Naive thymus-derived CD8-positive, alpha-beta T cell (primary cell): ENCODE measurements at regions of chr5 and their contacts with region 1.

Region 1: DNA sequence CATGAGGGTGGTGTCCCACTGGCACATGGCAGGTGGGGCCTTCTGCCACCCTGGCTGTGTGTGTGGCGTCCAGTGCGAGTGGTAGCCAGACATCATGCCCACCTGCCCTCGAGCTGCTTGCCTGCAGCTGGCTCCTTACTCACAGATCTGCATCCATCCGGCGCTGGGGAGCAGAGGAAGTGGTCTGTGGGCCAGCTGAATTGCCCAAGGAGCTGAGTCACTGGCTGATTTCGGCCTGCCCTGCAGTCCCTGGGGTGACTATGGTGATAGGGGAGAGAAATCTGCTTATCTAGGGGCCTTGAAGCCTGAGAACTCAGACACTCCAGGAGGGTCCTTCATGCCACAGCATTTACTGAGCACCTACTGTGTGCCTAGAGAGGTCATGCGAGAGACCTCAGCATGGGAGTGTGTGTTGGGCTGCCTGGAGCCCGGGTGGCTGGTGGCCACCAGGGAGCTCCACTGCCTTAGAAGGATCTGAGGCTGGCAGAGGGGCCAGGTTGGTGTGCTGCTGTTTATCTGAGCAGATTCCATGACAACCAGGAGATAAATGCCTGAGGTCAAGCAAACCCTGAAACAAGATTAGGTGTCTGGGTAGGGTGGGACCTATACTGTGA is 57.1 kb downstream of the SLC22A5 start:
- DNase-seq: peak in 5 of 10 donors; percentile 31 to 59 (median 36)
- ATAC-seq: peak; percentile 31 to 40
- H3K4me3 Mint-ChIP-seq: peak overlapping the region; percentile 62 to 90 (median 84)
- H3K27ac Mint-ChIP-seq: peak overlapping the region; percentile 95 to 100 (median 98)
- H3K4me1 Mint-ChIP-seq: peaks cover 51 to 100% (median 98%) of the 10 kb centered on the region in 4 donors
- H3K27me3 Mint-ChIP-seq: no peaks in the 10 kb centered on the region

Region 2: DNA sequence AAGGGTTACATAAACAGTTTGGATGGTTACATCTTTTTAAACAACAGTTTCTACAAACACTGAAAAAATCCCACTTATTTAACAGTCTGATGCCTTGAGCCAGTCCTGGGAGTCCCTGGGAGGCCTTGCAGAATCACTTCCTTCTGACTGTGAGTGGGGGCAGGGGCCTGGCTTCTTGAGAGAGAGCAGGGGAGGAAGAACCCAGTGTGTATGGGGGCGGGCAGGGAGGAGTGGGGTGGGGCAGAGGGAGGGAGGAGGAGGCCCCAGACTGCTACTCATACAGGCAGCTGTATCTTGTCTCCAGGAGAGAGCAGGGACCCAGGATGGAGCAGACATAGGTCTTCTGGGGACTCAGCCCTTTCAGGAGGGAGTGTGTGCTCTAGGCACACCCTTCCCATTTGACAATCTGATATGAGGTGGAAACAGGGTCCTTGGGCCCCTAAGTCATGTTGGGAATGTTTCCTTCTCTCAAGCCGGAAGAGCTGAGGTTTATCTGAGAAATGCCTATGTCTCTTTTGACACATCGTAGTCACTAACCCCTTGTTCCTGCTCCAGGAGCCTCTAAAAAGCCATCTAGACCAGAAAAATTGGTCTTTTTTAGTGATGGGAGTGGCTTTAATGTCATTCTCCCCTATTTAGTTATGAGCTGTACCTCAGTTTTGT is 11.1 kb after region 1 on chr5:
- POLR2A ChIA-PET with region 1: interaction called, 39 read pairs
- DNase-seq: peak; percentile 29 to 82 (median 52)
- ATAC-seq: peak; percentile 90 to 93
- H3K4me3 Mint-ChIP-seq: peak overlapping the region; percentile 38 to 77 (median 68)
- H3K27ac Mint-ChIP-seq: peak overlapping the region; percentile 84 to 94 (median 90)
- H3K4me1 Mint-ChIP-seq: peaks cover 47 to 95% (median 87%) of the 10 kb centered on the region in 4 donors
- H3K27me3 Mint-ChIP-seq: no peaks in the 10 kb centered on the region